ENCODE measurements at regions of chr2 and their contacts with region 1.

Region 1: DNA sequence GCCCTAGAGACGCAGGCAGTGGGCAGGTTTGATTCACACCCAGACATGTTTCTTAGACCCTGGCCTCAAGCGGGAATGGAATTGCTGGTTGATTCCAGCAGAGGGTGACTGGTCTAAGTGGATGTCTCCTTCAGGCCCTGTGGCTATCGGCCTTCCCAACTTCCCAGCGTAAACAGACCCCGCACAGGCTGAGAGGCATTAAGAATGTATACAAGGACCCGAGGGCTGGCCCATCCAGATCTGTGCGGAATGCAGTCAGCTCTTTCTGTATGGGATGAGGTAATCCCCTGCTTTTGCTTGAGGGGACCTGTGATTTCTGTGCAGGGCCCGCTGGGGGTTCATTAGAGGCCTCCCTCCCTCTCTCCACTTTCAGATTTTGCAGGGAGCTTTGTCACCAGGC is 6.5 kb downstream of the ACKR3 start:
- DNase-seq: peak in 1 of 2 donors; percentile 28
- H3K4me3 ChIP-seq: no peak overlapping the region
- H3K27ac ChIP-seq: peak overlapping the region; percentile 12 to 74 (median 17)
- H3K4me1 ChIP-seq: peaks cover 59 to 81% of the 10 kb centered on the region in 2 donors
- H3K27me3 ChIP-seq: no peaks in the 10 kb centered on the region
- CTCF ChIP-seq: no peak
- POLR2A ChIP-seq: no peak

Region 2: DNA sequence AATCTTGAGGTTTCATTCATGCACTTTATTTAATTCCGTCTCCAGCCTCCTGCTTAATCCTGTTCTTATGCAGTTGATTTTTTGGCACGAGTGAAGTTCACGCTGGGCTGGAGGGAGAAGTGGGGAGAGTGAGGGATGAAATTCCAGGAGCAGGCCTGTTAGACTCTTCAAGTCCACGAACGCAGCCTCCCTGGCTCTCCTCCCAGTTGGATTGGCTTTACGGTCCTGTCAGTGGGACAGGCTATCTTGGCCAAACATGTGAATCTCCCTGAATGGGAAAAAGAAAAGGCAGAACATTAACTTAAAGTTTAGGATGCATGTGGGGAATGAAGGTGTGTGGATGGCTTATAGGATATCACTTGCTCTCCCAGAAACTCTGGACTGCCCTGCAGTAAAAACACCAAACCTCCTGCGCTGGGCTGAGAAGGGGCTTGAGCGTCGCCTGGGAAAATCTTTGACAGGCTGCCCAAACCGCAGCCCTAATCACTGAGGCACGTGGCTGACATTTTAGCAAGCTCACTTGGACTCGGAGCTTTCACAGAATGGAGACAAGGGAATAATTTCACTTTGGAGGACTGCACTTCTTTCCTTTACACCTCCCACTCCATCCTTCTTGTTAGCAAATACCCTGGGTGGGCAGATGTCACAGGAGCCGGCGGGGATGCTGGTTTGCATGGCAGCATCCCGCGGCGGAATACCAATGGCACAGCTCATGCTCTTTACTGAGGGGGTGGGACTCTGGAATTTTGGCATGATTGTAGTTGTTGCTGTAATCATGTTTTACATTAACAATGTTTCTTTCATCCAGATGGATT is 87.4 kb after region 1 on chr2:
- intact Hi-C with region 1: loop called (anchors 10 kb)
- DNase-seq: peak; percentile 94 to 96
- H3K4me3 ChIP-seq: no peak overlapping the region
- H3K27ac ChIP-seq: peak overlapping the region; percentile 71 to 88 (median 87)
- H3K4me1 ChIP-seq: peaks cover 66 to 68% of the 10 kb centered on the region in 2 donors
- H3K27me3 ChIP-seq: no peaks in the 10 kb centered on the region
- CTCF ChIP-seq: no peak
- POLR2A ChIP-seq: no peak

Region 3: DNA sequence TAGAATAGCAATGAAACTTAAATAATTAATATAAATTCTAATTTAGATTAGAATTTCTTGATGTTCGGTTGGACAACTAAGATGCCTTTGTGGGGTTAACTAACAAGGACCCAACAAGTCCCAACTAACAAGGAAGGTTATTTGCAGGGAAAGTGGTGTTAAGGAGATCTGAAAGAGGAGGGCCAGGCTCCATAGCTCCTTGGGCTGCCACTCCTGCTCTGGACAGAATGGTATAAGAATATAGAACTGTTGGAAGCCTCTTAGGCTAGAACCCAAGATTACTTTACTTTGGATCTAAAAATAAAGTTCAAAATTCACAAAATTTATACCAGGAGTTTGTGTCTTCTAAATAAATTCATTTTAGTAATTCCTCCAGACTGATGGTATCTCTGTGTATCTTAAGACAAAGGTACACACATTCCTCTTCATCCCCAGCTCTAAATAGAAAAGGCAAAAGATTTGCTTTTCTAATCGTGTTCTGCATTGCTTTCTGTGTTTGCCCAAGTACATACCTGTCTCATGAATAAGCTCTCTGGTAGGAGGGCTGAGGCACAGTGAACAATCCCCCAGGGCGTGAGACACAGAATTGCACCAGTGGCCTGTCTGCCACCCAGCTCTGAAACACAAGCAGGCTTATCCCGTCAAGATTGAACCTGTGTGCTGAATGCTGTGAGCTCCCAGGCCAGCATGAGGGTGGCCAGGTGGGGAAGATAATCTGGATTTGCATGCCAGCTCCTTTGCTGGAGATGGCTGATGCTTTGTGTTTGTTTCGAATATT is 169.5 kb after region 1 on chr2:
- intact Hi-C with region 1: loop called (anchors 10 kb)
- DNase-seq: peak; percentile 78 to 88
- H3K4me3 ChIP-seq: no peak overlapping the region
- H3K27ac ChIP-seq: peak overlapping the region; percentile 73 to 83 (median 76)
- H3K4me1 ChIP-seq: peaks cover 51 to 62% of the 10 kb centered on the region in 2 donors
- H3K27me3 ChIP-seq: no peaks in the 10 kb centered on the region
- CTCF ChIP-seq: peak in 1 of 6 experiments; percentile 21
- POLR2A ChIP-seq: peak in 1 of 2 donors; percentile 56